Activated B cell treated with CpG ODN at 0.5 μM for 24 hours (primary cell): ENCODE measurements at regions of chr1 and their contacts with region 1.

Region 1: GRCh38 chr1:35797380-35797779 is 10.4 kb upstream of the AGO4 start:
- DNase-seq: no peak
- ATAC-seq: no peak
- H3K4me3 Mint-ChIP-seq: peak overlapping the region; percentile 60
- H3K27ac Mint-ChIP-seq: peak overlapping the region; percentile 46
- H3K4me1 Mint-ChIP-seq: peaks cover 26% of the 10 kb centered on the region
- H3K27me3 Mint-ChIP-seq: no peaks in the 10 kb centered on the region
- CTCF ChIP-seq: no peak

Region 2: GRCh38 chr1:35691080-35691479 is 106.3 kb before region 1 on chr1:
- CTCF ChIA-PET with region 1: no interaction called
- POLR2A ChIA-PET with region 1: no interaction called
- intact Hi-C with region 1: no loop called
- DNase-seq: no peak
- ATAC-seq: no peak
- H3K4me3 Mint-ChIP-seq: no peak overlapping the region
- H3K27ac Mint-ChIP-seq: no peak overlapping the region
- H3K4me1 Mint-ChIP-seq: no peaks in the 10 kb centered on the region
- H3K27me3 Mint-ChIP-seq: peaks cover 23% of the 10 kb centered on the region
- CTCF ChIP-seq: no peak

Region 3: DNA sequence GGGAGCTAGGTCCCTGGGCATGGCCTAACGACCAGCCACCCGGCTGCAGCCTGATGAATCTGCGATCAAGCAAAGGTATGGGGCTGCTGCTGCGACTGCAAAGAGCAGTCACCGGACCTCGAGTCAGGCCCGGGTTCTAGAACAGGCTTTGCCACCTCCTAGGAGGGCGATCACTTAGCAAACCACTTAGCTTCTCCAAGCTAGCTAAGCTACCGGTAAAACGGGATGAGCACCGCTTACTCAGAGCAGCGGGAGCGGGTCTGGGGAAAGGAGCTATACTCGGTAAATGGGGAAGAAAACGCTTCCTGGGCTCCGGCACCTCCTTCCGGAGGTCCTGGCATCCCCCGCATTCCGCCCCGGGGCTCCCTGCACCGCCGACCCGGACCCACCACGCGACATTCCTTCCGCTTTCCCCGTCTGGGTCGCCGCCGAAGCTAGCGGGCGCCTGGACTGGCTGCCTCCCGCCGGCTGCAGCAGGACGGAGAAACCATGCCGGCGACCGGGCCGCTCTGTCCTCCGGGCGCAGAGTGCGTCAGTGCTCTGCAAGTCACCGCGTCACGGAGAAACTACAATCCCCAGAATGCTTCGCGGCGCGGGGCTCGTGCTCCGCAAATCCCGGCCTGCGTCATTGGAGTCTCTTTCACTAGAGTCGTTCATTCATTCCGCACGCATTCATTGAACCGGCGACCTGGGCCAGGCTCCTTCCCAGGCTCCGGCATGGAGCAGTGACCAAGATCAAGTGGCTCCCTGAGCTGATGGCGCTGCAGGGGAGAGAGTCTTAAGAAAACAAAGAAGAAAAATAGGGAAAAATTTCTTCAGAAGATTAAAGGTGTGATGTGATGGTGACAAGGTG is 600.2 kb after region 1 on chr1 and contains the start of gene LSM10:
- CTCF ChIA-PET with region 1: no interaction called
- POLR2A ChIA-PET with region 1: interaction called, 11 read pairs
- intact Hi-C with region 1: no loop called
- DNase-seq: peak; percentile 87
- ATAC-seq: peak; percentile 82
- H3K4me3 Mint-ChIP-seq: peak within 1 kb of the TSS; percentile 99
- H3K27ac Mint-ChIP-seq: peak within 1 kb of the TSS; percentile 95
- H3K4me1 Mint-ChIP-seq: peaks cover 68% of the 10 kb centered on the region
- H3K27me3 Mint-ChIP-seq: no peaks in the 10 kb centered on the region
- CTCF ChIP-seq: no peak
- total RNA-seq, gene LSM10: 59.8 and 62.7 TPM in 2 replicates